Right ventricle myocardium superior (tissue), 1 donor: ENCODE measurements at regions of chr15 and their contacts with region 1.

Region 1: GRCh38 chr15:76057332-76058000 is 2.3 kb upstream of the TMEM266 start:
- DNase-seq: no peak
- ATAC-seq: no peak

Region 2: GRCh38 chr15:75947092-75947491 is 110.4 kb before region 1 on chr15:
- intact Hi-C with region 1: no loop called
- DNase-seq: no peak
- ATAC-seq: no peak

Region 3: DNA sequence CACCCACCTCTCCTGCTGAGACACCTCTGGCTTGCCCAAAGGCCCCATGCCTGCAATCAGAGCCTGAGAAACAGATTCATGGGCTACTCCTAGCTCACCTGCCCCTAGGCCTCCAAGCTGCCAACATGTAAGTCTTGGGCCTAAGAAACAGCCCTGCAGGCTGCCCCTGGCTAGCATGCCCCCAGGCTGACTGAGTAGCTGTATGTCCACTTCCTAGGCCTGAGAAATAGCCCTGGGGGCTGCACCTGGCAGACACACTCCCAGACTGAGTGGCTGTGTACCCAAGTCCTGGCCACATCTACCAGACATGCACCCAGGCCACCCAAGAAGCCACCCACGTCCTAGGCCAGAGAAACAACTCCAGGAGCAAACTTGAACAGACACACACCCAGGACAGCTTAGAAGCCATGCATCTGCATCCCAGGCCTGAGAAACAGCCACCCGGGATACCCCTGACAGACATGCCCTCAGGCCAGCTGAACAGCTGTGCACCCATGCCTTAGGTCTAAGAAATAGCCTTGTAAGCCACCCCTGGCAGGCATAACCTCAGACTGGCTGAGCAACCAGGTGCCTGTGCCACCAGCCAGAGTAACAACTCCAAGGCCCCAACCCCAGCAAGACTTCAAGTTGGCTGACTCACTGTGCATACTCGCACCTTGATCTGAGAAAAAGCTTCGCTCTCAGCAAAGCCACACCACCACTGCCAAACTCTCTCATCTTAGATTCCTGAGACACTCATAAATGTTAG is 33.3 kb before region 1 on chr15:
- intact Hi-C with region 1: no loop called
- DNase-seq: no peak
- ATAC-seq: no peak

Region 4: GRCh38 chr15:76139368-76140073 is 82.1 kb after region 1 on chr15:
- intact Hi-C with region 1: loop called (anchors 5 kb)
- DNase-seq: peak; percentile 57
- ATAC-seq: peak; percentile 91